ENCODE measurements at regions of chr15 and their contacts with region 1.

Region 1: GRCh38 chr15:39782441-39783138 is at the start of gene FSIP1:
- DNase-seq: peak; percentile 98
- ATAC-seq: peak; percentile 99
- H3K4me3 Mint-ChIP-seq: peak within 1 kb of the TSS; percentile 74
- H3K27ac Mint-ChIP-seq: peak within 1 kb of the TSS; percentile 84
- H3K4me1 Mint-ChIP-seq: peaks cover 46% of the 10 kb centered on the region
- H3K27me3 Mint-ChIP-seq: no peaks in the 10 kb centered on the region
- total RNA-seq, gene FSIP1: 0.25 to 0.32 TPM

Region 2: GRCh38 chr15:38554354-38554753 is 1228.2 kb before region 1 on chr15:
- CTCF ChIA-PET with region 1: no interaction called
- POLR2A ChIA-PET with region 1: no interaction called
- intact Hi-C with region 1: loop called in 1 of 2 experiments (anchors 10 kb)
- DNase-seq: peak; percentile 73
- ATAC-seq: peak; percentile 74
- H3K4me3 Mint-ChIP-seq: no peak overlapping the region
- H3K27ac Mint-ChIP-seq: peak overlapping the region; percentile 91
- H3K4me1 Mint-ChIP-seq: peaks cover 89% of the 10 kb centered on the region
- H3K27me3 Mint-ChIP-seq: no peaks in the 10 kb centered on the region

Region 3: DNA sequence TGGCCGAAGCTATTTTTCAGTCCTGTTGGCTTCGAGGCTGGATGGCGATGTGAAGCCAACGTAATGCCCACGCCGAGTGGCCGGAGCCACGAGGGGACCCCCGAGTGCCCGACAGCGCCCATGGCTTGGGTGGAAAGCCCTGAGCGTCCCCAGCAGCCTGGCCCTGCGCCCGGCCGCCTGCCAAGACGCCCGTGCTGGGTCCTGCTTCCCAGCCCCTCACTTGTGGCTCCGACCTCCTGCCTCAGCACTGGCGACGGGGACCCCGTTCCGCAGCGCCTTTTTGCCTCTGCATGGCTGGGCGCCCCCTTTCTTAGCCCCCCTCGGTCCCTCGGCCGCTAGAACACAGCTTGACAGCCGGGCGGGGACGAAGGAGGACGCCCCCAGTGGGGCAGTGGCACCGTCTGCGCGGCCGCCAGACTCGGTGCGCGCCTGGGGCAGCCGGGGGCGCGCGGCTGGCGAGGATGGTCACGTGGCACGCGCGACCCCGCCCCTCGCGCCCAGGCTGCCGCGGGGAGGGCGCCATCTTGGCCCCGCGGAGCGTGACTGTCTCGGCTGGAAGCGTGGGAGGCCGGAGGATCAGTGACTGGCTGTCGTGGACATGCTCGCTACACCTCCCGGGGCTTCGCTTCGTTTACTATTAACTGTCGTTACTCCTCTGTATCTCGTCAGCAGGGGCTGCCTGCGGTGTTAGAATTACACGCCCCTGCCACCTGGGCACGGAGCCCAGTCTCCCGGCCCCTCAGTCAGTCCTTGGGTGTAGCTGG is 138.1 kb after region 1 on chr15:
- CTCF ChIA-PET with region 1: no interaction called
- POLR2A ChIA-PET with region 1: no interaction called
- intact Hi-C with region 1: loop called in 1 of 2 experiments (anchors 1 kb)
- DNase-seq: peak; percentile 93
- ATAC-seq: peak; percentile 89
- H3K4me3 Mint-ChIP-seq: peak overlapping the region; percentile 73
- H3K27ac Mint-ChIP-seq: peak overlapping the region; percentile 73
- H3K4me1 Mint-ChIP-seq: peaks cover 29% of the 10 kb centered on the region
- H3K27me3 Mint-ChIP-seq: peaks cover 19% of the 10 kb centered on the region

Region 4: DNA sequence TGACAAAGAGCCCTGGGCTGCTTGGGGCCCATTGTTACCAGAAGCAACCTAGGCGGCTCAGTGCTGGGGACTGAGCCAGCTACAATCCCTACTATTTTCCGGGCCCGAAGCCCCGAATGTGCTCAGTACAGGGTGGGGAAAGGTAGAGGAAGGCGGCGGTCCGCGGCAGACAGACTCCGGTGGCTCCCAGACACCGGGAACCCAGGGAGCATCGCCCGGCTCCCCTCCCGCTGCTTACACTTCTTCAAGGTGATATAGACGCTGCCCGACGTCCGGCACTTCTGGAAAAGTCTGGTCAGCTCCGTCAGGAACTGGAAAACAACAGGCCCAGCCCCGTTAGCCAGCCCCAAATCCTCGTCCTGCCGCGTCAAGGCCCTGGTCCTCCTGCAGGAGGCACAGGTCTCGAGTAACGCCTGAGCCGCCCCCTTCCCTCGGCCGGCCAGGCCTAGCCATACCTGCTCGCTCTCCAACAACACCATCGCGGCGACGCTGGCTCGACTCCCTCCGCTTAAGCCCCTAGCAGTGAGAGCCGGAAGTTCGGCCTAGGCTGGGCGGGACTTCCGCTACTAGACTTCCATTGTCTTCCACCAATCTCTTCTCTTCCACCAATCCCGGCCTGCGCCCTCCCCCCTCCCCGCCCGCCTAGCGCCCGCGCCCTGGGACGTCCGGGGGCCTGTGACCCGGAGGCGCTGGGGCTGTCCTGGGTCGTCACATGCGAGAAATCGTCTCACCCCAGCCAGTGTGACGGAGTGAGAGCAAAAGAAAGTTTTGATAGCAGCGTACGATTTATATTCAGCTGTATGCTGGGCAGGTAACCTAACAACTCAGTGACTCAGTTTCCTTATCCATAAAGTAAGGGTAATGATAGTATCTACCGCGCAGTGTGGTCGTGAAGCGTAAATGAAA is 256.3 kb after region 1 on chr15 and contains the start of gene SRP14:
- CTCF ChIA-PET with region 1: no interaction called
- POLR2A ChIA-PET with region 1: no interaction called
- intact Hi-C with region 1: loop called (anchors 1 to 2 kb)
- DNase-seq: peak; percentile 95
- ATAC-seq: peak; percentile 96
- H3K4me3 Mint-ChIP-seq: peak within 1 kb of the TSS; percentile 97
- H3K27ac Mint-ChIP-seq: peak within 1 kb of the TSS; percentile 98
- H3K4me1 Mint-ChIP-seq: peaks cover 49% of the 10 kb centered on the region
- H3K27me3 Mint-ChIP-seq: no peaks in the 10 kb centered on the region
- total RNA-seq, gene SRP14: 124 to 157 TPM

Region 5: DNA sequence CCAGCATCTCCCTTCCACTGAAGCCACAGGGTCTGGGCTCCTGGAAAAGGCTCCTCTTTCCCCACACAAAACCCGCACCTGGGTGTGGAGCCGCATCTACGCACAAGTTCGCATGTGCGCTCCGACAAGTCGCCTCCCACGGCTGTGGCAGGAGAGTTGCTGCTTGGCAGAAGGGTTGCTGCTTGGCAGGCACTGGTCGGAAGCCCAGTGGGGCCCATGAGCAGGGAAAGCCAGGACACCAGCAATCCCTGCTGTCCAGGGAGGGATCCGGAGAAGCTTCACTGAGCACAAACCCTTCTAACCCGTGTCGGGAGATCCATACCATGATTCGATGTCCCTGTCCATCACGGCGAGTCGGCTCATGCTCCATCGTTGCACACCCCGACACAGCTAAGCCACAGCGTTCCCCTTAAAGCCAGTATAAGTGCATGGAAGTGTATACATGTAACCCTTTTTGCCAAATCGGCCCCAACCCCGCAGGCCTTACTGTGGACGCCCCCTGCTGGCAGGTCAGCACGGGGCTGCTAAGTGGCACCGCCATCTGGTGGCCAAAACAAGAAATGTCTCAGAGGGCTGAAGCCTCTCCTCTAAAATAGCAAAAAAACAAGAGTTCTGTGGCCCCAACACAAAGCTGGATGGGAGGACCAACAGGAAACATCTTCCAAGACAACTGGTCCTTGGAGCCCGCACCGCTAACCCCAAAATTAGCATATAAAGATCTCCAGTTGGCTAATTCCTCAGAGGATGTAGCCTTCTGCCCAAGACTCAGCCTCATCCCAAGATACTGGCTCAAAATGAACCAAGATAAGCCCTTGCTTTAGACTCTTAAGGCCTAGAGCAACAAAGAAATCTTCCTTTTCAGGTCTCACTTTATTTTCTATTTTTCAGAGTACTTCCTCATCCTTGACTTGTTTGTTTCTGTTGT is 492.0 kb after region 1 on chr15:
- CTCF ChIA-PET with region 1: interaction called, 6 read pairs
- POLR2A ChIA-PET with region 1: no interaction called
- intact Hi-C with region 1: loop called (anchors 1 to 2 kb)
- DNase-seq: peak; percentile 93
- ATAC-seq: peak; percentile 79
- H3K4me3 Mint-ChIP-seq: no peak overlapping the region
- H3K27ac Mint-ChIP-seq: no peak overlapping the region
- H3K4me1 Mint-ChIP-seq: no peaks in the 10 kb centered on the region
- H3K27me3 Mint-ChIP-seq: peaks cover 14% of the 10 kb centered on the region

Region 6: DNA sequence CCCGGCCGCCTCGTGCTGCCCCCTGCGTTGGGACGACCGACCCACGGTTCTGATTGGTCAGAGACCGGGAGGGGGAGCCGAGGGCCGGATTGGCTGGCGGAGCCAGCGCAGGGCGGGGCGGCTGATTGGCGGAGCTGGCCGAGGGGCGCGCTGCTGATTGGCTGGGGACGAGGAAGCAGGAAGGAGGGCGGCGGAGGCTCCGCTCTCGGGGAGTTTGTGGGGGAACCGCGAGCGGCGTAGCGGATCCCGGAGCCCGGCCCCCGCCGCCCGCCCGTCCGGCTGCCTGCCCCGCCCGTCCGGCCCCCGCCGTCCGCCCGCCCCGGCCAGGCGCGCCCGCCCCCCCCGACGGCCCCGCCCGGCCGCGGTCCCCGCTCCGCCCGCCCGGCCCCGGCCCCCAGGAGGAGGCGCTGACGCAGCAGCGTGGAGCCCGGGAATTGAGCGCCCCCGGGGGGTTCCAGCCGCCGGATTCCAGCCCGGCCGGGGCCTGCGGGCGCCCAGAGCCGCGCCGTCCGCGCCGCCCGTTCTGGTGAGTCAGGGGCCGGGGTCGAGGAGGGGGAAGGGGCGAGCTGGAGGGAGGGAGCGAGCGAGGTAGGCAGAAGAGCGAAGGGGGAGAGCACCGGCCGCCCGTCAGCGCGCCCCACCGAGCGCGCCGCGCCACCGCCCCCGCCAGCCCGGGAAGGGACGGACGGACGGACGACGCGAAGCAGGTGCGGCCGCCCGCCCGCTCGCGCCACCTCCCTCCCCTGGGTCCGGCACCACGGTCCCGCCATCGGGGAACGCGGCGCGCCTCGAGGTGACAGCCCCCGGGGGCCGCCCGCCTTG is 658.4 kb after region 1 on chr15 and contains the start of gene BAHD1:
- CTCF ChIA-PET with region 1: no interaction called
- POLR2A ChIA-PET with region 1: no interaction called
- intact Hi-C with region 1: loop called in 1 of 2 experiments (anchors 2 kb)
- DNase-seq: peak; percentile 97
- ATAC-seq: peak; percentile 92
- H3K4me3 Mint-ChIP-seq: peak within 1 kb of the TSS; percentile 82
- H3K27ac Mint-ChIP-seq: peak within 1 kb of the TSS; percentile 75
- H3K4me1 Mint-ChIP-seq: peaks cover 56% of the 10 kb centered on the region
- H3K27me3 Mint-ChIP-seq: peaks cover 29% of the 10 kb centered on the region
- total RNA-seq, gene BAHD1: 15.3 to 16.7 TPM

Measured in activated CD4-positive, alpha-beta T cell treated with anti-CD3 and anti-CD28 coated beads for 36 hours (primary cell).